ENCODE measurements at regions of chr12 and their contacts with region 1.

Region 1: GRCh38 chr12:119613319-119613936 is 19.9 kb downstream of the TMEM233 start:
- DNase-seq: peak; percentile 21
- H3K4me3 ChIP-seq: no peak overlapping the region
- H3K27ac ChIP-seq: no peak overlapping the region
- H3K4me1 ChIP-seq: peaks cover 8% of the 10 kb centered on the region
- H3K27me3 ChIP-seq: no peaks in the 10 kb centered on the region
- CTCF ChIP-seq: no peak
- POLR2A ChIP-seq: no peak

Region 2: DNA sequence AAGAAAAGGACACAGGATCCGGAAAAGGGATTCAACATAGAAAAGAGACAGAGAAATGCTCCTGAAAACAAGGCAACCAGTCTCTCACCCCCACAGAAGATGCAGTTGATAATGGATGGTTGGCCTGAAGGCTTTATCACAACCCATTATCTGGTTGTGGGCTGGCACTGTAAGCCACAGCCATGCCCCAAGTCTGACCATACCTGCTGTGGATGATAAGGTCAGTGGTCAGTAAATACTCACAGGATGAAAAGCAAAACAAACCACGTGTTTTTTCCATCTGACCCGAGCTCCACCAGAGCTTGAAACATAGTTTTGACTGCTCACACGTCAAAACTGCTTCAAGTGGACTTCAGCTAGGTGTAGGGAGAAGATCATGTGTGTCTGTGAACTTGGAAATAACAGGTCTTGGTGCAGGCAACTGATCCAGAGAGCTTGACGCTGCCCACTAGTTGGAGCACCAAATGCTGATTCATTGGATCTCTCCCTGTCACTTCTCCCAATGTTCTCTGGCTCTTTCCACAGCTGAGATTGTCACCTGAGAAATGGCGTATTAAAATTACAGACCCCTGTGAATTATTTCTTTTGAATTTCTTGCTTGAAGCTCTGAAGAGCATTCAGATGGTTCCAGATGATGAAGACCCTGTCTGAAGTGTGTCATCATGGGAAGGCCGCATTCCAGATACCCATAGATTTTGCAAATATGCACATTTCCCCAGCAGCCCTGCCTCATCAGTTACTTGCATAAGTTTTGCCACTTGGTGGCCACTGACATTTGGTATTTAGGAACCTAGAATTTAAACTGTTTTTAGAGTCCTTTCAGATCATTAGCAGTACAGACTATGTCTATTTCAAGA is 11.3 kb before region 1 on chr12:
- CTCF ChIA-PET with region 1: interaction called, 10 read pairs
- POLR2A ChIA-PET with region 1: no interaction called
- dilution Hi-C with region 1: no loop called
- intact Hi-C with region 1: no loop called
- DNase-seq: no peak
- H3K4me3 ChIP-seq: no peak overlapping the region
- H3K27ac ChIP-seq: no peak overlapping the region
- H3K4me1 ChIP-seq: peaks cover under 1% of the 10 kb centered on the region
- H3K27me3 ChIP-seq: no peaks in the 10 kb centered on the region
- CTCF ChIP-seq: no peak
- POLR2A ChIP-seq: no peak

Region 3: DNA sequence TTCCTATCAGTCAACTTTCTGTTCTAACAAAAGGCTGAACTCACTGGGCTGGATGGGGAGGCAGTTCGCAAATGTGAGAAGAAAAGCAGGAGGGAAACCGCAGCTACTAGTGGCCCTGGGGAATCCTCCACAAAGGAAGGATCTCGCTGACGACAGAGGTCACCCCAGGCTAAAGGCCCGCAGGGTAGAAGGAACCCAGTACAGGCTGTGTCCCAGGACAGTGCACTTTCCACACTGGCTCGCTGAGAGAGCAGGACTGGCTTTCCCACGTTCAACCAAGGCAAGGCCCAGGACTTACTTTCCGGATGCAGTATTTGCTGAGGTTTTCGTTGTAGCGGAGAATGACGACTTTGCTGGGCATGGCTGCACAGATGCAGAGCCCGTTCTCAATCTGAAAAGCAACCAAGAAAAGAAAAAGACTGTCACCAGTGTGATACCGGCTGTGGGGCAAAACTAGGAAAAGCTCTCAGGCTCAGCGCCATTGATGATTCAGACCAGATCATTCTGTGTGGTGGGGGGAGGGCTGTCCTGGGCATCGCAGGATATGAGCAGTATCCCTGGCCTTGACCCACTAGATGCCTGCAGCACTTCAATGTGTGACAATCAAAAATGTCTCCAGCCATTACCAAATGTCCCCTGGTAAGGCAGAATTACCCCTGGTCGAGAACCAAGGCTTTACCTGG is 90.8 kb after region 1 on chr12:
- CTCF ChIA-PET with region 1: no interaction called
- POLR2A ChIA-PET with region 1: no interaction called
- dilution Hi-C with region 1: no loop called
- intact Hi-C with region 1: no loop called
- DNase-seq: peak; percentile 52
- H3K4me3 ChIP-seq: no peak overlapping the region
- H3K27ac ChIP-seq: no peak overlapping the region
- H3K4me1 ChIP-seq: peaks cover 6% of the 10 kb centered on the region
- H3K27me3 ChIP-seq: no peaks in the 10 kb centered on the region
- CTCF ChIP-seq: no peak
- POLR2A ChIP-seq: no peak

Region 4: DNA sequence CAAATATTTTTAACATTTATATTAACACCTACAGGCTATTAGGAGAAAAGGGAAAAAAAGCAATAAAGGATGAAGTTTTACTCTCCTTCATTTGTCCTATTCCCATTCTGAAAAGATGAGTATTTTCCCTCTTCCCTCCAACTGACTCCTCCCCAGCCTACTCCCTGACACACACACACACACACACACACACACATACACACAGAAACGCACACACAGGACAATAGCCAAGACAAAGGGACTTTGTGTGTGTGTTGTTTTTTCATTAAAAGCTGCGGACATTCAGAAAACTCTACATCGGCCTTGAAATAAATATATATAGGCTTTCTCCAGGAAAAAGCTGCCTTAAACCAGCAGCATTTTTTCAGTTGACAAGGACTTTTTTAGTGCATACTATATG is 129.3 kb after region 1 on chr12:
- CTCF ChIA-PET with region 1: no interaction called
- POLR2A ChIA-PET with region 1: no interaction called
- dilution Hi-C with region 1: no loop called
- intact Hi-C with region 1: no loop called
- DNase-seq: no peak
- H3K4me3 ChIP-seq: no peak overlapping the region
- H3K27ac ChIP-seq: no peak overlapping the region
- H3K4me1 ChIP-seq: no peaks in the 10 kb centered on the region
- H3K27me3 ChIP-seq: no peaks in the 10 kb centered on the region
- CTCF ChIP-seq: no peak
- POLR2A ChIP-seq: no peak